Sigmoid colon (tissue), 7 donors: ENCODE measurements at regions of chr11 and their contacts with region 1.

Region 1: GRCh38 chr11:3160252-3161031 is 4.7 kb downstream of the OSBPL5 start:
- DNase-seq: peak; percentile 96
- H3K4me3 ChIP-seq: peak overlapping the region; percentile 50 to 63 (median 56)
- H3K27ac ChIP-seq: peak overlapping the region; percentile 91 to 96 (median 92)
- H3K4me1 ChIP-seq: peaks cover 0 to 90% (median 84%) of the 10 kb centered on the region in 4 donors
- H3K27me3 ChIP-seq: no peaks in the 10 kb centered on the region
- CTCF ChIP-seq: no peak
- EP300 ChIP-seq: no peak
- POLR2A ChIP-seq: peak in 1 of 2 donors; percentile 40

Region 2: GRCh38 chr11:2846056-2846455 is 314.4 kb before region 1 on chr11:
- intact Hi-C with region 1: no loop called
- DNase-seq: no peak
- H3K4me3 ChIP-seq: no peak overlapping the region
- H3K27ac ChIP-seq: no peak overlapping the region
- H3K4me1 ChIP-seq: no peaks in the 10 kb centered on the region
- H3K27me3 ChIP-seq: no peaks in the 10 kb centered on the region
- CTCF ChIP-seq: no peak
- EP300 ChIP-seq: no peak
- POLR2A ChIP-seq: no peak

Region 3: GRCh38 chr11:2891326-2892214 is 268.9 kb before region 1 on chr11:
- intact Hi-C with region 1: no loop called
- DNase-seq: no peak
- H3K4me3 ChIP-seq: peak overlapping the region in 3 of 4 donors; percentile 21 to 46 (median 39)
- H3K27ac ChIP-seq: peak overlapping the region; percentile 12 to 57 (median 36)
- H3K4me1 ChIP-seq: peaks cover 0 to 43% (median 39%) of the 10 kb centered on the region in 4 donors
- H3K27me3 ChIP-seq: no peaks in the 10 kb centered on the region
- CTCF ChIP-seq: no peak
- EP300 ChIP-seq: no peak
- POLR2A ChIP-seq: no peak

Region 4: DNA sequence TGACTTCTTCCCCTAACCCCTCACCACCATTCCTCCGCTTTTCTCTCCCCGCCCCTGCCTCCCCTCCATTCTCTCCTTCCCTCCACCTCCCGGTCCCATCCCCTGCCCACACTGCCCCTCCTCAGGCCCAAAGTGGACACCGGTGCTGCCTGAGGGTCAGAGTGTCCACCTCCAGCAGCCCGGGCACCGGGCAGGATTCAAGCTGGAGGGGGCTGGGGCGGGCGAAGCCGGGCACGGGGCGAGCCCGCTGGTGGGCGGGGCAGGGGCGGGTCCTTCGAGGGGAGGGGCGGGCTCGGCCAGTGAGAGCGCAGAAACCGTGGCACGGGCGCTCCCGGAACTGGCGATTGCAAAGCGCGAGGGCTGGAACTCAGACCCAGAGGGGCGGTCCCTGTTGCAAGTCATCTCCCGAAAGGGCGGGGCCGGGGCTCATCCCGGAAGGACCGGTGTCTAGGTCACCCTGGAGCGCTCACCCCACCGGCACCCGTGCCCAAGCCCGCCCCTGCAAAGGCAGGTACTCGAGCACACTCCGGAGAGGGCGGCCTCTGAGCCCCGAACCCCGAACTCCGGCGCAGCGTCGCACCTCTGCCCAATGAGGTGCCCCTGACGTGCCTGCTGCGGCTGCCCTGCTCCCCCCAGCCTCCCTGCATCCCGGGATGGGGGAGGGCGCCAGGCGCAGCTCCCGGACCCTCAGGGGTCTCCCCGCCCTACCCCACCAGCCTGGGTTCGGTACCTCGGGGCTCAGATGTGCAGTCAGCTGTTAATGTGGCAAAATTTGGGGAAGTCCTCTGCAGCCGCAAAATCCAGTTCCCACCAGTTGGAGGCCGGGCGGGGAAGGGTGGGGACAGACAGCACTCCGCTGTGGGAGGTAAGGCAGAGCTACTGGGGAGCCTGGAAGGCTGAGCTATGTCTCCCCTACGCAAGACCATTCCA is 258.3 kb before region 1 on chr11:
- intact Hi-C with region 1: loop called (anchors 10 kb)
- DNase-seq: peak; percentile 99
- H3K4me3 ChIP-seq: peak overlapping the region; percentile 47 to 87 (median 67)
- H3K27ac ChIP-seq: peak overlapping the region; percentile 75 to 81 (median 78)
- H3K4me1 ChIP-seq: peaks cover 0 to 26% (median 16%) of the 10 kb centered on the region in 4 donors
- H3K27me3 ChIP-seq: peaks cover 0 to 4% (median 0%) of the 10 kb centered on the region in 3 donors
- CTCF ChIP-seq: no peak
- EP300 ChIP-seq: peak in 1 of 4 donors; percentile 28
- POLR2A ChIP-seq: peak; percentile 32 to 69

Region 5: GRCh38 chr11:3057069-3057963 is 103.1 kb before region 1 on chr11 and contains the start of gene CARS1:
- intact Hi-C with region 1: loop called (anchors 5 kb)
- DNase-seq: peak; percentile 98
- H3K4me3 ChIP-seq: peak within 1 kb of the TSS; percentile 74 to 94 (median 84)
- H3K27ac ChIP-seq: peak within 1 kb of the TSS; percentile 83 to 94 (median 87)
- H3K4me1 ChIP-seq: peaks cover 0 to 39% (median 28%) of the 10 kb centered on the region in 4 donors
- H3K27me3 ChIP-seq: no peaks in the 10 kb centered on the region
- CTCF ChIP-seq: no peak
- EP300 ChIP-seq: peak in 2 of 4 donors; percentile 46 to 66
- POLR2A ChIP-seq: peak; percentile 41 to 62
- total RNA-seq, gene CARS1: 34.6 to 49.0 (median 39.6) TPM

Region 6: GRCh38 chr11:3109921-3110706 is 50.3 kb before region 1 on chr11:
- intact Hi-C with region 1: no loop called
- DNase-seq: peak; percentile 78
- H3K4me3 ChIP-seq: no peak overlapping the region
- H3K27ac ChIP-seq: no peak overlapping the region
- H3K4me1 ChIP-seq: no peaks in the 10 kb centered on the region
- H3K27me3 ChIP-seq: no peaks in the 10 kb centered on the region
- CTCF ChIP-seq: peak; percentile 48 to 71 (median 59)
- EP300 ChIP-seq: no peak
- POLR2A ChIP-seq: no peak

Region 7: GRCh38 chr11:3123761-3124733 is 36.4 kb before region 1 on chr11:
- intact Hi-C with region 1: loop called (anchors 2 kb)
- DNase-seq: peak; percentile 97
- H3K4me3 ChIP-seq: no peak overlapping the region
- H3K27ac ChIP-seq: peak overlapping the region; percentile 80 to 91 (median 86)
- H3K4me1 ChIP-seq: peaks cover 0 to 38% (median 30%) of the 10 kb centered on the region in 4 donors
- H3K27me3 ChIP-seq: no peaks in the 10 kb centered on the region
- CTCF ChIP-seq: peak in 1 of 4 experiments; percentile 1
- EP300 ChIP-seq: peak in 3 of 4 donors; percentile 64 to 97 (median 85)
- POLR2A ChIP-seq: no peak

Region 8: GRCh38 chr11:3217676-3218482 is 57.4 kb after region 1 on chr11:
- intact Hi-C with region 1: loop called (anchors 5 kb)
- DNase-seq: peak; percentile 62
- H3K4me3 ChIP-seq: no peak overlapping the region
- H3K27ac ChIP-seq: no peak overlapping the region
- H3K4me1 ChIP-seq: peaks cover 0 to 6% (median 0%) of the 10 kb centered on the region in 4 donors
- H3K27me3 ChIP-seq: peaks cover 5 to 78% (median 33%) of the 10 kb centered on the region in 3 donors
- CTCF ChIP-seq: no peak
- EP300 ChIP-seq: no peak
- POLR2A ChIP-seq: no peak